CD4-positive, alpha-beta memory T cell (primary cell): ENCODE measurements at regions of chr17 and their contacts with region 1.

Region 1: GRCh38 chr17:64145757-64146417 is 15.9 kb upstream of the ERN1 start:
- DNase-seq: peak; percentile 95 to 99 (median 97)
- H3K4me3 ChIP-seq: peak overlapping the region; percentile 77 to 95
- H3K4me3 Mint-ChIP-seq: no peak overlapping the region
- H3K27ac ChIP-seq: peak overlapping the region; percentile 87
- H3K27ac Mint-ChIP-seq: no peak overlapping the region
- H3K4me1 ChIP-seq: peaks cover 22% of the 10 kb centered on the region
- H3K4me1 Mint-ChIP-seq: peaks cover 15 to 30% (median 21%) of the 10 kb centered on the region in 4 donors
- H3K27me3 ChIP-seq: no peaks in the 10 kb centered on the region
- H3K27me3 Mint-ChIP-seq: no peaks in the 10 kb centered on the region

Region 2: GRCh38 chr17:63931099-63931561 is 214.8 kb before region 1 on chr17:
- CTCF ChIA-PET with region 1: no interaction called
- POLR2A ChIA-PET with region 1: interaction called, 34 read pairs
- intact Hi-C with region 1: no loop called
- DNase-seq: peak; percentile 43 to 66 (median 49)
- H3K4me3 ChIP-seq: peak overlapping the region; percentile 48 to 51
- H3K4me3 Mint-ChIP-seq: peak overlapping the region; percentile 92 to 98 (median 94)
- H3K27ac ChIP-seq: peak overlapping the region; percentile 71
- H3K27ac Mint-ChIP-seq: peak overlapping the region; percentile 48 to 96 (median 94)
- H3K4me1 ChIP-seq: peaks cover 25% of the 10 kb centered on the region
- H3K4me1 Mint-ChIP-seq: peaks cover 7 to 32% (median 22%) of the 10 kb centered on the region in 4 donors
- H3K27me3 ChIP-seq: no peaks in the 10 kb centered on the region
- H3K27me3 Mint-ChIP-seq: no peaks in the 10 kb centered on the region

Region 3: DNA sequence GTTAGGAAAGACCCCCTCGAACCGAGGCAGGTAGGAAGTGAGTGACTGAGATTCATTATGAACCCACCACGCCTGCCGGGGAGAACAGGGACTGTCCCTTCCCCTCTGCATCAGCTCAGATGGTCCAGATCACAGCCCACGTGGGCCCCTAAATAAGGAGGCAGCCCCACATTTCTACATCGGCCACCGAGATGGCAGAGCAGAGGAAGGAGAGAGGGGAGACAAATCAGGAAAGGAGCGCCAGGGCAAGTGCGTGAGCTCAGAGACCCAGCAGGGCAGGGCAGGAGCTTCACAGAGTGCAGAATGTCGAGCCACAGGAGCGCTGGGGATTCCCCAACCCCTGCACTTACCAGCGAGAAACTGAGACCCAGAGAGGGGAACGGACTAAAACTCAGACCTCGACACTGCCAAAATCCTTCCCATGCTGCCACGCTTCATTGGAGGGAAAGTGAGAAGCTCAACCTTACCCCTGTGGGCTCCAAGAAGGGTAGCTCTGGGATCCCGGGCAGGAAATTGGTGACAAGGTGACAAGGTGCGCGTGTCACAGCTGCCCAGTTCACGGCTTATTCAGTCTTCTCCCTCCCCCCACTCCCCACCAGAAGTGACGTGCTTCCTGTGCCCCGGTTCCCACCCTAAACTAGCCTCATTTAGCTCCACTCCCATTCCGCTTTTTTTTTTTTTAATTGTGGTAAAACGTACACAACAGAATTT is 125.7 kb before region 1 on chr17 and contains the start of gene ICAM2:
- CTCF ChIA-PET with region 1: interaction called, 11 read pairs
- POLR2A ChIA-PET with region 1: interaction called, 99 read pairs
- intact Hi-C with region 1: no loop called
- DNase-seq: peak; percentile 94 to 99 (median 97)
- H3K4me3 ChIP-seq: peak within 1 kb of the TSS; percentile 93 to 96
- H3K4me3 Mint-ChIP-seq: peak within 1 kb of the TSS; percentile 97 to 100 (median 99)
- H3K27ac ChIP-seq: peak within 1 kb of the TSS; percentile 93
- H3K27ac Mint-ChIP-seq: peak within 1 kb of the TSS; percentile 99 to 100 (median 100)
- H3K4me1 ChIP-seq: peaks cover 71% of the 10 kb centered on the region
- H3K4me1 Mint-ChIP-seq: peaks cover 51 to 85% (median 63%) of the 10 kb centered on the region in 4 donors
- H3K27me3 ChIP-seq: no peaks in the 10 kb centered on the region
- H3K27me3 Mint-ChIP-seq: peaks cover 0 to 1% of the 10 kb centered on the region in 2 donors
- total RNA-seq, gene ICAM2: 150 to 158 TPM

Region 4: GRCh38 chr17:64081802-64082799 is 63.8 kb before region 1 on chr17:
- CTCF ChIA-PET with region 1: no interaction called
- POLR2A ChIA-PET with region 1: interaction called, 31 read pairs
- intact Hi-C with region 1: no loop called
- DNase-seq: peak; percentile 63 to 83 (median 75)
- H3K4me3 ChIP-seq: peak overlapping the region; percentile 4 to 21
- H3K4me3 Mint-ChIP-seq: peak overlapping the region in 5 of 8 donors; percentile 54 to 86 (median 80)
- H3K27ac ChIP-seq: peak overlapping the region; percentile 31
- H3K27ac Mint-ChIP-seq: peak overlapping the region in 1 of 7 donors; percentile 71
- H3K4me1 ChIP-seq: peaks cover 78% of the 10 kb centered on the region
- H3K4me1 Mint-ChIP-seq: peaks cover 18 to 34% (median 31%) of the 10 kb centered on the region in 4 donors
- H3K27me3 ChIP-seq: no peaks in the 10 kb centered on the region
- H3K27me3 Mint-ChIP-seq: no peaks in the 10 kb centered on the region

Region 5: DNA sequence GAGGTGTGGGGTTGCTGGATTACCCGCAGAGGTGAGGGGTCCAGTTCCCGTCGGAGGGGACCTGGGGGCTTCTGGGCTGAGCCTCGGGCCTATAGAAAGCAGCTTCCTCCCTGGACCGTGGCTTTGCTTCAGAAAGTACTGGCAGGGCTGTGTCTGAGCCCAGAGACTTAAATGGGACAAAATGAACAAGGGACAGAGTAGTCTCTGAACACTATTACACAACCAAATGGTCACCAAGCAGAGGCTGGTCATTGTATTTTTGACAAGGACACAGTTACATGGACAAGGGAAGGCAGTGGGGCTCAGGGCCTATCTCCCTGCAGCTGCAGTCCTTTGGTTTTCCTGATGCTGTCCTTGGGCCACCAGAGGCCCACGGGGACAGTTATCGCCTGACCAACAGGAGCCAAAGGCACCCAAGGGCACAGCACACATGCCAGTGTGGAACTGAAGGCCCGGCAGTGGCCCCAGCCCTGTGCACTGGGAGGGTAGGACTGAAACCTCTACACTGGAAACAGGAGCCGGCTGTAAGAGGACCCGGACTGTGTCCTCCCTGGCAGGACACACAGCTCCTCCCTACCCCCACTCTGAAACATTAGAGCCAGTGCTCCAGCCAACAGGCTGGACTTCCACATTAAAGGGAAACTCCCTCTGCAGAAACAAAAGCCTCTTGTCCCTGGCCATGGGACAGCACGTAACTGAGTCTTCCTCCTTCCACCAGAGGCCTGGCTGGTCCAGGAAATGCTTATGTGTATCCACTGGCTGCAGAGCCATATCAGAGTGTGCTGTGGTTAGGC is 10.1 kb after region 1 on chr17:
- CTCF ChIA-PET with region 1: interaction called, 3 read pairs
- POLR2A ChIA-PET with region 1: interaction called, 20 read pairs
- intact Hi-C with region 1: no loop called
- DNase-seq: no peak
- H3K4me3 ChIP-seq: no peak overlapping the region
- H3K4me3 Mint-ChIP-seq: no peak overlapping the region
- H3K27ac ChIP-seq: no peak overlapping the region
- H3K27ac Mint-ChIP-seq: no peak overlapping the region
- H3K4me1 ChIP-seq: no peaks in the 10 kb centered on the region
- H3K4me1 Mint-ChIP-seq: no peaks in the 10 kb centered on the region
- H3K27me3 ChIP-seq: no peaks in the 10 kb centered on the region
- H3K27me3 Mint-ChIP-seq: no peaks in the 10 kb centered on the region

Region 6: DNA sequence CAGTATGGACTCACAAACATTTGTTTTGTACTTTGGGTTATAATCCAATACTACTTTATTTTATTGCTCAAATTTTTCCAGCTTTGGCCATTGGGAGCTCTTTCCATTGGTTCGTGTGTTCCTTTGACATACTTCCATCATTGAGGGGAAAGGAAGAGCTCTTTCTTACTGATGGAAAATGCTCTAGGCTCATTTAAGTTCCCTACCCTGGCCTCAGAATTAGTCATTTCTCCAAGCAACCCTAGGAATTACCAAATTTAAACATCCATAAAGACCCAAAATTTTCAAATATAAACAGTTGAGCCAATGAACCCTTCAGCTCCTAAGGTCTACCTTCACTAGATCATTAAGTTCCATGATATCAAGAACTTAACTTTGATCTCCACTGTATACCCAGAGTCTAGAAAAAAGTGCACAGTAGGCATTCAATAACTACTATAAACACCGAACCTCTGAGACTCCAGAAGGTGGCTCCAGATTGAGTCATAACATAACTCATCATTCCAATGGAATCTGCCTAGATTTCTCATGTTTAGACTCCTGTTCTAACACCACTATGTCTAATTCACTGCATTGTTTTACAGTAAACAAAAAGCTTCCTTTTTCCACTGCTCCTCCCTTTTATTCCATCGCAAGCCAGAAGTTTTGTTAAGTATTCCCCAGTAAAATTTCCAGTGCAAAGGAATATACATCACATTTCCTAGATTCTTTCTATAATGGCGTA is 477.2 kb after region 1 on chr17:
- CTCF ChIA-PET with region 1: no interaction called
- POLR2A ChIA-PET with region 1: no interaction called
- intact Hi-C with region 1: no loop called
- DNase-seq: no peak
- H3K4me3 ChIP-seq: no peak overlapping the region
- H3K4me3 Mint-ChIP-seq: no peak overlapping the region
- H3K27ac ChIP-seq: no peak overlapping the region
- H3K27ac Mint-ChIP-seq: peak overlapping the region in 1 of 7 donors; percentile 13
- H3K4me1 ChIP-seq: peaks cover 22% of the 10 kb centered on the region
- H3K4me1 Mint-ChIP-seq: peaks cover 20 to 43% (median 32%) of the 10 kb centered on the region in 4 donors
- H3K27me3 ChIP-seq: no peaks in the 10 kb centered on the region
- H3K27me3 Mint-ChIP-seq: no peaks in the 10 kb centered on the region